Adrenal gland (tissue), 19 donors: ENCODE measurements at regions of chr12 and their contacts with region 1.

Region 1: GRCh38 chr12:76031537-76032073 is at the start of gene PHLDA1:
- DNase-seq: peak; percentile 92 to 97 (median 96)
- H3K4me3 ChIP-seq: peak within 1 kb of the TSS; percentile 63 to 73 (median 70)
- H3K27ac ChIP-seq: peak within 1 kb of the TSS; percentile 86 to 96 (median 93)
- H3K4me1 ChIP-seq: peaks cover 17 to 38% of the 10 kb centered on the region in 2 donors
- H3K27me3 ChIP-seq: no peaks in the 10 kb centered on the region
- CTCF ChIP-seq: peak; percentile 20 to 76 (median 58)
- POLR2A ChIP-seq: peak; percentile 78 to 94
- total RNA-seq, gene PHLDA1: 13.1 to 49.3 (median 33.3) TPM

Region 2: DNA sequence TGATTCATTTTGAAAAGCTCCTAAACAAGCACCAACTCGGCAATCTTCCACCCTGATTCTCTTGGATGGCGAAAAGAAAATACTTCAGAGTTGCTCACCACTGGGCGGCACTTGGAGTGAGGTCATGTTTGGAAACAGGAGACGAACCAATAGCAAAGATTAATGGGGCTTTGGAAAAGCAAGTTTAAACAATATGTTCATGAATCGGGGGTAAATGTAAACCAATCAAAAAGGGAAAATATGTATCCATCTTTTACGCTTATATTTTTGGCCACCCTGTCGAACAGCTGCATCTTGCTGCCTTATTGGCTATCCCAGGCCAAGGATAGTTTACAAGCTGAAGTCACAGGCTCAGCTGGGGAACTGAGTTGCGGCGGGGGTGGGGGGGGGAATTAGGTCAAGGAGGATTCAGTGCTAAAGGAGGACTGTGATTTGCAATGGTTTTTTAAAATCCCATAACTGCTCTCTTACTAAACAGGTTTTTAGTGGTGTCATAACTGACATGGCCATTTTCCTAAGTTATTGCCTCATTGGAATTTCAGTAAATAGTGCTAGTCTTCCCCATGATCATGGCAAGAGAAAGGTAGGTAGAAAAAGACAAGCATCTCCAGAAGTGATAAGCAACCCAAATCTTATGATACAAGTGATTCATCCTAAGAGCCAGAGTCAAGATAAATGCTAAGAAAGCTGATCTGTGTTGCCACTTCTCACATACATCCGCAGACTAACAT is 210.6 kb before region 1 on chr12:
- intact Hi-C with region 1: loop called in 1 of 2 experiments (anchors 5 kb)
- DNase-seq: peak; percentile 46 to 77 (median 71)
- H3K4me3 ChIP-seq: no peak overlapping the region
- H3K27ac ChIP-seq: peak overlapping the region in 3 of 5 donors; percentile 1 to 75 (median 46)
- H3K4me1 ChIP-seq: peaks cover 0 to under 1% of the 10 kb centered on the region in 2 donors
- H3K27me3 ChIP-seq: no peaks in the 10 kb centered on the region
- CTCF ChIP-seq: peak in 3 of 6 experiments; percentile 30 to 39 (median 31)
- POLR2A ChIP-seq: no peak